ENCODE measurements at regions of chr22 and their contacts with region 1.

Region 1: DNA sequence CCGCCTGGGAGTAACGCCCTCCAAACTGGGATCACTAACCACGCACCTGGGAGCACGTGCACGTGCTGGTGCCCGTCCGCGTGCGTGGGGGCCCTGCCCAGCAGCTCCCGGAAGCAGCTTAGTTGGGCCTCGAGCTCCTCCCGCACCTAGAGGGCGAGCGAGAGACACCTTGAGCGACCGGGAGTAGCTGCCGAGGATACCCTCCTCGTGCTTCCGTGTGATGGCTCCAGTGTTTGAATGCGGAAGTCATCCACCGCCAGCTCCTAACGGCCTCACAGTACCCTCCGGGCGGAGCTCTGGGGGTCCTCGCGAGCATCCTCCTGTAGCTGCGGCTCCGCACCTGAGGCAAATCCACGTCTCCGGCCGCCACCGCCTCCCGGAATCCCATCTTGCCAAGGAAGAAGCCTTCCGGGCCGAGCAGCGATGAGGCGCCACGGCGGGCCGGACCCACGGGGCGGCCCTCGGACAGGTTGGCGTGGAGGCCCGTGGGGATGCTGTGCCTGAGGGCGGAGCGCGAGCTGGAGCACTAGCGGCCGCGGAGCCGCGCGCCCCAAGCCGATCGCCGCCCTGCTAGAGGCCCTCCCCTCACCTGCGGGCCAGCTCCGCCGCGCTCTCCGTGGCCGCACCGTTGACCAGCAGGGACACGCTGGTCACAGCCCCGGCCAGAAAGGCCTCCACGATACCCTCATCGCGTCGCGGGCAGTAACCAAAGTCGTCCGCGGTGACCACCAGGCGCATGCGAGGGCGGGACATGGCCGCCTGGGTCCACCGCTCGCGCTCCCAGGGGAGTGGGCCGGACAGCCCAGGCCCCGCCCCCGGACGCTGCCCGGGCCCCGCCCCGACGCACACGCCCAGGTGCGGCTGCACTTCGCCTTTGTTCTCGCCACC is at the start of gene YDJC:
- DNase-seq: peak; percentile 92 to 98 (median 97)
- ATAC-seq: peak; percentile 95 to 98 (median 96)
- H3K4me3 ChIP-seq: peak within 1 kb of the TSS; percentile 91 to 100 (median 96)
- H3K27ac ChIP-seq: peak within 1 kb of the TSS; percentile 68 to 80 (median 72)
- H3K4me1 ChIP-seq: peaks cover 11 to 12% (median 11%) of the 10 kb centered on the region in 3 donors
- H3K27me3 ChIP-seq: no peaks in the 10 kb centered on the region
- CTCF ChIP-seq: peak; percentile 23 to 48 (median 26)
- total RNA-seq, gene YDJC: 11.2 to 22.5 (median 13.6) TPM

Region 2: GRCh38 chr22:21082248-21082647 is 547.3 kb before region 1 on chr22:
- intact Hi-C with region 1: no loop called
- DNase-seq: no peak
- ATAC-seq: no peak
- H3K4me3 ChIP-seq: no peak overlapping the region
- H3K27ac ChIP-seq: no peak overlapping the region
- H3K4me1 ChIP-seq: no peaks in the 10 kb centered on the region
- H3K27me3 ChIP-seq: no peaks in the 10 kb centered on the region
- CTCF ChIP-seq: no peak

Region 3: DNA sequence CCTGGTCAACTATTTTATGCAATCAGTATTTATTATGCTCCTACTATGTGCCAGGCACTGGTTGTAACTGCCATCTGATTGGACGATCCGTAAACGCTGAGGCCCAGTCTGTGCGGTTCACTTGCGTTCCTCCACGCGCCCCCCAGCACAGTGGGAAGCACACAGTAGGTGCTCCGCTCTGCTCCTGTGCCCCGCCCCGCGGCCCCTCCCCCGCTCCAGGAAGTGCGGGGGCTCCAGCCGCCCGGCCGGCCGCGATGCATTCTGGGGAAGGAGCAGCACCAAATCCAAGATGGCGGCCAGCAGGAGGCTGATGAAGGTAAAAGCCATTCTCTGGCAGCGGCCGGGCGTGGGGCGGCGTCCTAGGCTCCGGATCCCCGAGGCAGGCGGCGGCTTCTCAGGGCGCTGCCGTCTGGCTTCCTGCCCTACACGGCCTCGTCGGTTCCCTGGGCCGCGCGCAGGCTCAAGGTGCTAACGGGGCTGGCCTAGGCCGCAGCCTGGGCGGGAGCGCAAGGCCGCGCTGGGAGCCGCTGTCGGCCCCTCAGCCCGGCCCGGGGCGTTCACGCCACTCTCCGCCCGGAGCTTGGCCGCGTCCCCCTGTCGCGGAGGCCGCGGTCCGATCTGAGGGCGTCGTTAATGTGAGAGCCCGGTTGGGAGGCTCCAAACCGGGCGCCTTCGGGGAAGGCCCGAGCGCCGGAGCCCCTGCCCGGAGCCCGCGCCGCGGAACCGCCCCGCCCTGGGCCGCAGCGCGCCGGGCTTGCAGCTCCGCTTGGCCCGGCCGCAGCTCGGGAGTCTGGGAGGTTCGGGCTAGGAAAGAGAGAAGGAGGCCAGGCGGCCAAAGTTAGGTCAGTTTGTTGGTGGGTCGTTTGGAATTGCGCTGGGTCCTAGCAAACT is 61.8 kb before region 1 on chr22 and contains the start of gene UBE2L3:
- intact Hi-C with region 1: loop called in 1 of 3 experiments (anchors 10 kb)
- DNase-seq: peak; percentile 77 to 93 (median 84)
- ATAC-seq: peak; percentile 87 to 93 (median 92)
- H3K4me3 ChIP-seq: peak within 1 kb of the TSS; percentile 66 to 98 (median 96)
- H3K27ac ChIP-seq: peak within 1 kb of the TSS; percentile 82 to 94 (median 86)
- H3K4me1 ChIP-seq: peaks cover 14 to 34% (median 15%) of the 10 kb centered on the region in 3 donors
- H3K27me3 ChIP-seq: no peaks in the 10 kb centered on the region
- CTCF ChIP-seq: no peak
- total RNA-seq, gene UBE2L3: 10.9 to 23.5 (median 14.8) TPM